ENCODE measurements at regions of chr1 and their contacts with region 1.

Region 1: GRCh38 chr1:78004719-78005447 is at the start of gene DNAJB4:
- DNase-seq: peak; percentile 97
- ATAC-seq: peak; percentile 96
- H3K4me3 ChIP-seq: peak within 1 kb of the TSS; percentile 47 to 66
- H3K27ac ChIP-seq: peak within 1 kb of the TSS; percentile 71
- H3K4me1 ChIP-seq: peaks cover 24 to 49% of the 10 kb centered on the region in 2 experiments
- H3K27me3 ChIP-seq: no peaks in the 10 kb centered on the region
- CTCF ChIP-seq: no peak
- POLR2A ChIP-seq: no peak
- RAD21 ChIP-seq: no peak; the same call in 1 of the 2 replicates
- total RNA-seq, gene DNAJB4: 26.0 TPM

Region 2: DNA sequence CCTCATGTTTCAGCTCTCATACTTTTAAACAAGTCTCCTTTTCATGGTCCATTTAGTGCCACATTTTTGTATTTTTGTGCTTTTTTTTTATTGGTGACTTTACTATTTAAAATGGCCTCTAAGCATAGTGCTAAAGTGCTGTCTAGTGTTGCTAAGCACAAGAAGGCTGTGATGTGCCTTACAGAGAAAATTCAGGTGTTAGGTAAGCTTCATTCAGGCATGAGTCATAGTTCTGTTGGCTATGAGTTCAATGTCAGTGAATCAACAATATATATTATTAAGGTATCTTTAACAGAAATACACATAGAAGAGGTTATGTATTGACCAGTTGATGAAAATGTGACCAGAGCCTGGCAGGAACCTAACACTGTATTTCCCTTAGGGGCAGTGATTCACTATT is 13.2 kb before region 1 on chr1:
- CTCF ChIA-PET with region 1: no interaction called
- POLR2A ChIA-PET with region 1: interaction called, 39 read pairs
- RAD21 ChIA-PET with region 1: no interaction called
- intact Hi-C with region 1: no loop called
- DNase-seq: no peak
- ATAC-seq: no peak
- H3K4me3 ChIP-seq: no peak overlapping the region
- H3K27ac ChIP-seq: no peak overlapping the region
- H3K4me1 ChIP-seq: peaks cover 0 to 9% of the 10 kb centered on the region in 2 experiments; a peak in 1 of 4 replicates
- H3K27me3 ChIP-seq: no peaks in the 10 kb centered on the region
- CTCF ChIP-seq: no peak
- POLR2A ChIP-seq: no peak
- RAD21 ChIP-seq: no peak

Region 3: GRCh38 chr1:78028976-78029375 is 24.1 kb after region 1 on chr1:
- CTCF ChIA-PET with region 1: no interaction called
- POLR2A ChIA-PET with region 1: interaction called, 15 read pairs
- RAD21 ChIA-PET with region 1: no interaction called
- intact Hi-C with region 1: no loop called
- DNase-seq: no peak
- ATAC-seq: no peak
- H3K4me3 ChIP-seq: no peak overlapping the region
- H3K27ac ChIP-seq: no peak overlapping the region
- H3K4me1 ChIP-seq: no peaks in the 10 kb centered on the region
- H3K27me3 ChIP-seq: no peaks in the 10 kb centered on the region
- CTCF ChIP-seq: no peak
- POLR2A ChIP-seq: no peak
- RAD21 ChIP-seq: no peak

Region 4: DNA sequence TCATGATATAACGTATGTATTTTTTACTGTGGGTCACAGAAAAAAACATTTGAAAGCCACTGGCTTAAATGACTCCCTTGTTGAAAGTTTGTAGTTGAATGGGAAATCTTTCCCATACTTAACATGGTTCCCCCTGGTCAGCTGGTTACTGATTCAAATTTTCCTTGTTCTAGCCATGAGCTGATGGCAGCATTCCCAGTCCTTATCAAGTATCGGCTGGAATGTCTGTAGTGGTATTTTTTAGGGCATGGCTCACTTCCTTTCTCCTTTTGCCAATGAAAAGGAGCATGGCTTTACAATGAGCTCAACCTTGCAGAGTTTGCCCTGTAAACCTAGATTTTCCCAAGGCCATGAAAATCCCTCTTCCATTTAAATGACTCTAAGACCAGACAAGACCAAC is 96.6 kb after region 1 on chr1:
- CTCF ChIA-PET with region 1: no interaction called
- POLR2A ChIA-PET with region 1: interaction called, 30 read pairs
- RAD21 ChIA-PET with region 1: no interaction called
- intact Hi-C with region 1: no loop called
- DNase-seq: peak; percentile 82
- ATAC-seq: peak; percentile 68
- H3K4me3 ChIP-seq: peak overlapping the region in 1 of 2 experiments; percentile 31; a peak in 1 of 4 replicates
- H3K27ac ChIP-seq: peak overlapping the region; percentile 53; the same call in 1 of the 2 replicates
- H3K4me1 ChIP-seq: peaks cover 17 to 55% of the 10 kb centered on the region in 2 experiments
- H3K27me3 ChIP-seq: no peaks in the 10 kb centered on the region
- CTCF ChIP-seq: no peak
- POLR2A ChIP-seq: no peak
- RAD21 ChIP-seq: peak; percentile 23; the same call in 1 of the 2 replicates

Measured in HCT116 (cell line).